K562 (cell line): ENCODE measurements at regions of chr15 and their contacts with region 1.

Region 1: GRCh38 chr15:98311566-98312188 is 336.7 kb upstream of the IGF1R start:
- DNase-seq: peak; percentile 58 to 77 (median 68)
- ATAC-seq: peak; percentile 74; the same call in 2 of the 3 replicates
- H3K4me3 ChIP-seq: no peak overlapping the region
- H3K27ac ChIP-seq: no peak overlapping the region
- H3K4me1 ChIP-seq: no peaks in the 10 kb centered on the region
- H3K27me3 ChIP-seq: no peaks in the 10 kb centered on the region
- CTCF ChIP-seq: peak; percentile 58 to 84 (median 64); a peak in 5 of 6 replicates
- EP300 ChIP-seq: no peak
- POLR2A ChIP-seq: no peak
- RAD21 ChIP-seq: peak; percentile 47 to 66

Region 2: DNA sequence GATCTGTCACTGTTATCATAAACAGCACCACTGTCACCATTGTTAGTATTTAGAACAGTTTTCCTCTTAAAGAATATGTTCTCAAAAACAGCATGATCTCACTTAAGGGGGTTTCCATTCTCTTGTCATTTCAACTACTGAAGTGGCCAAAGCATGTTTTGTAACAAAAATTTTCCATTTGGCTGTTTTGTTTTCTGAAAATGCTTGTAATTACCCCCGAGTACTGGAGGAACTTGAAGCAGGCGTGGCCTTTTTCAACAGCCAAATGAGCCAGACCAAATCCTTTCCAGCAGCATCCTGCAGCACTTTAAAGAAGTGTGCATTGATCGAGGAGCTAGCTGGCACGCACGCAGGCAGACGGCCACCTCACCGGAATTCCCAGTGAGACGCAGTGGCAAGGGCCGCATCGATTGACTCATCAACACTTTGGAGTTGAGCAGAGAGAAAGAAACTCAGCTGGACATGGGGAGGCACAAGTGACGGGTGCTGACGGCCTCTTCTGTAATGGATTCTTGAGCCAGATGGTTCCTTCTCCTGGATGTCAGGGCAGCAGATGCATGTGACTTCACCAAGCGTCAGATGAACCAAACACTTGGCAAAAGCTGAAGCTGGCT is 102.4 kb after region 1 on chr15:
- CTCF ChIA-PET with region 1: no interaction called
- POLR2A ChIA-PET with region 1: no interaction called
- in situ Hi-C with region 1: loop called (anchors 10 kb)
- intact Hi-C with region 1: no loop called
- DNase-seq: no peak
- ATAC-seq: no peak
- H3K4me3 ChIP-seq: no peak overlapping the region
- H3K27ac ChIP-seq: no peak overlapping the region
- H3K4me1 ChIP-seq: no peaks in the 10 kb centered on the region
- H3K27me3 ChIP-seq: peaks cover 4 to 20% of the 10 kb centered on the region in 2 experiments
- CTCF ChIP-seq: no peak
- EP300 ChIP-seq: no peak
- POLR2A ChIP-seq: no peak
- RAD21 ChIP-seq: no peak

Region 3: GRCh38 chr15:98421419-98422129 is 109.9 kb after region 1 on chr15:
- CTCF ChIA-PET with region 1: interaction called, 11 read pairs
- POLR2A ChIA-PET with region 1: no interaction called
- in situ Hi-C with region 1: loop called (anchors 10 kb)
- intact Hi-C with region 1: loop called (anchors 1 kb)
- DNase-seq: peak; percentile 61 to 90 (median 84)
- ATAC-seq: peak; percentile 97
- H3K4me3 ChIP-seq: no peak overlapping the region
- H3K27ac ChIP-seq: no peak overlapping the region
- H3K4me1 ChIP-seq: peaks cover 0 to 11% of the 10 kb centered on the region in 2 experiments; a peak in 1 of 5 replicates
- H3K27me3 ChIP-seq: peaks cover 4 to 41% of the 10 kb centered on the region in 2 experiments; a peak in 4 of 5 replicates
- CTCF ChIP-seq: peak; percentile 85 to 91 (median 88)
- EP300 ChIP-seq: no peak
- POLR2A ChIP-seq: no peak
- RAD21 ChIP-seq: peak; percentile 57 to 80

Region 4: DNA sequence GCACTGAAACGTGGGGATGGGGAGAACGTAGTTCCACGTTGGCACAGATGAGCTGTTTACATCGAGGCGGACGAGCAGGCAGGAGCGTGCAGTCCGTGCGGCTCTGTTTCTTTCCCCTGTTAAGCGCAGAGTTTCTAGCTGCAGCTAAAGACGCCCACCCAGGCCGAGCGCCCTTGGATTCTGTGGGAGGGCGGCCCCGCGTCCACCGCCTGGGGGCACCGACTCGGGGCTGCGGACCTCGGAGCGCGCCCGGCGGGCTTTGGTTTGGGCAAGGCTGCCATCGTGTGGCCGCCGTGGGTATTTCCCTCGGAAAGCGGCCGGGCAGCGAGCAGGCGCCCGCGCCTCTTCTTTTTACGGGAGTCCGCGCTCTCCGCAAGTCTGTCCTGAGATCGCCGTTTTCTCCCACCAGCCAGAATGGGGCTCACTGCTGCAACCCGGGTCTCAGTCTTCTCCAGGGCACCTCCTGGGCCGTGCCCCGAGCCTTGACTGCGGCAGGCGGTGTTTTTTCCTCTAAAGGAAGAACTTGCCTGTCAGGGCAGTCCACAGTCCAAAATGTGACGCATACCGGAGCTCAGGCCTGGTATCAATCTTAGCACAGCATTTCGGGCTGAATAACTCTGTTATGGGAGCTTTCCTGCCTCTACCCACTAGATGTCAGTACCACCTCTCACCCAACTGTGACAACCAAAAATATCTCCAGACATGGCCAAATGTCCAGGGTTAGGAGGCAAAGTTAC is 116.7 kb after region 1 on chr15:
- CTCF ChIA-PET with region 1: interaction called, 5 read pairs
- POLR2A ChIA-PET with region 1: interaction called, 4 read pairs
- in situ Hi-C with region 1: no loop called
- intact Hi-C with region 1: loop called (anchors 2 kb)
- DNase-seq: peak; percentile 61 to 81 (median 78)
- ATAC-seq: peak; percentile 97
- H3K4me3 ChIP-seq: no peak overlapping the region
- H3K27ac ChIP-seq: no peak overlapping the region
- H3K4me1 ChIP-seq: peaks cover 0 to 8% of the 10 kb centered on the region in 2 experiments; a peak in 2 of 5 replicates
- H3K27me3 ChIP-seq: peaks cover 2 to 13% of the 10 kb centered on the region in 2 experiments; a peak in 2 of 5 replicates
- CTCF ChIP-seq: peak; percentile 65 to 77 (median 69)
- EP300 ChIP-seq: no peak
- POLR2A ChIP-seq: no peak
- RAD21 ChIP-seq: peak; percentile 28 to 60; a peak in 2 of 4 replicates